Activated CD4-positive, alpha-beta T cell treated with anti-CD3 and anti-CD28 coated beads for 36 hours (primary cell): ENCODE measurements at regions of chr11 and their contacts with region 1.

Region 1: DNA sequence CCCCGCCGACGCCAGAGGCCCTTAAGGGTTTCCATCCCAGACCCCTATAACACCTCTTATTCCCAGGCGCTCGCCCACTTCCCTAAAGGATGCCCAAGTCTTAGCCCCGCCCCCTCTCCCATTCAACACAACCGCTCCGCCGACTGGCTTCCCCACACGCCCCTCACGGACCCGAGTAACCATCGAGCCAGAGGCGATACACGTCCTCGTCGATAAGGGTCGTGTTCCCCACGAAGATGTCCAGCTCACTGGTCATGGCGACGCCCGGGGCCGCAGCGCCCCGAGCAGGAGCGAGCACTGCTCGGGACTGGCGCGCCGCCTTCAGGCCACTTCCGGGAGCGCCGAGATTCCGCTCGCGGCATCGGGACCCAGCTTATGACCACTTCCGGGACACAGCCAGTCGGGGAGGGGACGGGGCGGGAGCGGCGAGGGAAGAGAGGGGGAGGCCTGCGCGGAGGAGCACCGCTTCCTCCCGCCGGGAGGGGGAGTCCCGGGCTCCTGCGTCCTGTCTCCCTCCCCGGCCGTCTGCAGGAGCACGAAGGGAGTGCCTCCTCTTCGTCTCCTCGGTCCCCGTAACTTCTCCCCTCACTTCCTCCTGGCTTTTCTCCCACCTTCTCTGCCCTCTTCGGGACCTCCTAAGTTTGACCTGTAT is at the start of gene FIBP:
- DNase-seq: peak; percentile 99
- ATAC-seq: peak; percentile 68
- H3K4me3 Mint-ChIP-seq: peak within 1 kb of the TSS; percentile 94
- H3K27ac Mint-ChIP-seq: peak within 1 kb of the TSS; percentile 95
- H3K4me1 Mint-ChIP-seq: peaks cover 57% of the 10 kb centered on the region
- H3K27me3 Mint-ChIP-seq: no peaks in the 10 kb centered on the region
- total RNA-seq, gene FIBP: 95.4 to 121 TPM

Region 2: GRCh38 chr11:65662799-65663638 is 225.3 kb before region 1 on chr11 and contains the start of gene RELA:
- CTCF ChIA-PET with region 1: interaction called, 3 read pairs
- POLR2A ChIA-PET with region 1: interaction called, 4 read pairs
- intact Hi-C with region 1: loop called in 1 of 2 experiments (anchors 1 kb)
- DNase-seq: peak; percentile 96
- ATAC-seq: peak; percentile 90
- H3K4me3 Mint-ChIP-seq: peak within 1 kb of the TSS; percentile 88
- H3K27ac Mint-ChIP-seq: peak within 1 kb of the TSS; percentile 97
- H3K4me1 Mint-ChIP-seq: peaks cover 41% of the 10 kb centered on the region
- H3K27me3 Mint-ChIP-seq: no peaks in the 10 kb centered on the region
- total RNA-seq, gene RELA: 76.9 to 109 TPM

Region 3: DNA sequence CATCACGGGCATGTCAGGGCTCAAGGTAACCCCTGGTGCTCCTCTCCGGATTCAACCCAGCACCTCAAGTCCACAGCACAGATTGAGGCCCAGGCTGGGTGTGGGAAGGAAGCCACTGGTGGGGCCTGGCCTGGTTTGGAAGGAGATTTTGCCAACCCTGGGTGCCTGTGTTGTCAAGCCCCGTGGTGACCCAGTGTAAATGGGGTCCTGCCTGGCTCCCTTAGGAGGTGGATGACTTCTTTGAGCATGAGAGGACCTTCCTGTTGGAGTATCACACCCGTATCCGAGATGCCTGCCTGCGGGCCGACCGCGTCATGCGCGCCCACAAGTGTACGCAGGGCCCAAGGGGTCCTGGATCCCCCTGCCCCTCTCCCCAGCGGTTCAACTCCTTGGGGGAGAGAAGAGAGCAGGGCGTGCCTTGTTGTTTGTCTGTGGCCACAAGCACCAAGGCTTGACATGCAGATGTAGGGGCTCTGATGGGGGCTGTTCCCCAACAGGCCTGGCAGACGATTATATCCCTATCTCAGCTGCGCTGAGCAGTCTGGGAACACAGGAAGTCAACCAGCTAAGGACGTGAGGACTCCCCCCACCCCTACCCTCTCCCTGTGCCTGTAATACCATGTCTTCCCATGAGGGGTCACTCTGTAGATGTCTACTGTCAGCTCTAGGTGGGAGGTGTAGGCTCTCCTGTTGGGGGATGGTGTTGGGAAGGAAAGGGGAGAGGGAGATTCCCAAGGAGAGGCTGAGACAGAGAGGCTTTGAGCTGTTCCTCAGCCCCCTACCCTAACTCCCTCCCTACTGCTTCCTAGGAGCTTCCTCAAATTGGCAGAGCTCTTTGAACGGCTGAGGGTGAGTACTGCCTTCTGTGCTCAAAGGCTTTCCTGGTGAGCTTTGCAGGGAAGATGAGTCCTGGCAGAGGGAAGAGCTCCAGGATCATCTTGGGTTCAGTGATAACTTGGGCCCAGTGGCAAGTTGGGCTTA is 37.2 kb before region 1 on chr11:
- CTCF ChIA-PET with region 1: interaction called, 11 read pairs
- POLR2A ChIA-PET with region 1: interaction called, 3 read pairs
- intact Hi-C with region 1: no loop called
- DNase-seq: no peak
- ATAC-seq: peak; percentile 45
- H3K4me3 Mint-ChIP-seq: no peak overlapping the region
- H3K27ac Mint-ChIP-seq: no peak overlapping the region
- H3K4me1 Mint-ChIP-seq: peaks cover 18% of the 10 kb centered on the region
- H3K27me3 Mint-ChIP-seq: no peaks in the 10 kb centered on the region

Region 4: GRCh38 chr11:65911682-65912568 is 23.6 kb after region 1 on chr11:
- CTCF ChIA-PET with region 1: interaction called, 10 read pairs
- POLR2A ChIA-PET with region 1: interaction called, 6 read pairs
- intact Hi-C with region 1: no loop called
- DNase-seq: no peak
- ATAC-seq: no peak
- H3K4me3 Mint-ChIP-seq: no peak overlapping the region
- H3K27ac Mint-ChIP-seq: no peak overlapping the region
- H3K4me1 Mint-ChIP-seq: peaks cover 18% of the 10 kb centered on the region
- H3K27me3 Mint-ChIP-seq: peaks cover 2% of the 10 kb centered on the region

Region 5: DNA sequence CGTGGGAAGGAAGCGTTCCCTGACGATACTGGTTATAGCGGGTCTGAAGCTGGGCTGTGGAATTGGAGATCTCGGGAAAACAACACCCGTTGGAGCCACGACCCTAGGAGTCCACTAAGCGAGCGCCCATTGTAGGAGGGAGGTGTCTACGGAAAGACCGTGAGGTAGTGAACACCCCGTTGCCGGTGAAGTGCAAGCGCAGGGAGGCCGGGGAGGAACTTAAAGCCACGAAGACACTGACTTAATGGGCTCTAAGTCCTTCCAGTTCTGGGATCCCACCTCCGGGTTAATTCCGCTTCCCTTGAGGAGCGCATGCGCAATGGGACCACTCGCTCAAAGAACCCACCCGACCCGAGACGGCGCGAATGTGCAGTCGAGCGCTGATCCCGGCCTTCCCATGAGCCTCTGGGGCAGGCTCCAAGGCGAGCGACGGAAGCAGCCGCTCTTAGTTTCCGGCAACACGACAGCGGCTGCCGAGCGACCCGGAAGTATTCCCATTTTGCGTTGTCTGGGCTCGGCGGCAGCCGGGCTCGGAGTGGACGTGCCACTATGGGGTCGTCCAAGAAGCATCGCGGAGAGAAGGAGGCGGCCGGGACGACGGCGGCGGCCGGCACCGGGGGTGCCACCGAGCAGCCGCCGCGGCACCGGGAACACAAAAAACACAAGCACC is 73.1 kb after region 1 on chr11 and contains the start of gene SART1:
- CTCF ChIA-PET with region 1: interaction called, 19 read pairs
- POLR2A ChIA-PET with region 1: no interaction called
- intact Hi-C with region 1: loop called (anchors 1 to 2 kb)
- DNase-seq: peak; percentile 98
- ATAC-seq: peak; percentile 91
- H3K4me3 Mint-ChIP-seq: peak within 1 kb of the TSS; percentile 92
- H3K27ac Mint-ChIP-seq: peak within 1 kb of the TSS; percentile 97
- H3K4me1 Mint-ChIP-seq: peaks cover 37% of the 10 kb centered on the region
- H3K27me3 Mint-ChIP-seq: no peaks in the 10 kb centered on the region
- total RNA-seq, gene SART1: 54.7 to 84.5 TPM

Region 6: GRCh38 chr11:66045177-66045639 is 156.9 kb after region 1 on chr11:
- CTCF ChIA-PET with region 1: interaction called, 10 read pairs
- POLR2A ChIA-PET with region 1: no interaction called
- intact Hi-C with region 1: no loop called
- DNase-seq: peak; percentile 91
- ATAC-seq: peak; percentile 93
- H3K4me3 Mint-ChIP-seq: peak overlapping the region; percentile 21
- H3K27ac Mint-ChIP-seq: no peak overlapping the region
- H3K4me1 Mint-ChIP-seq: peaks cover 22% of the 10 kb centered on the region
- H3K27me3 Mint-ChIP-seq: peaks cover 4% of the 10 kb centered on the region